K562 (cell line): ENCODE measurements at regions of chr19 and their contacts with region 1.

Region 1: DNA sequence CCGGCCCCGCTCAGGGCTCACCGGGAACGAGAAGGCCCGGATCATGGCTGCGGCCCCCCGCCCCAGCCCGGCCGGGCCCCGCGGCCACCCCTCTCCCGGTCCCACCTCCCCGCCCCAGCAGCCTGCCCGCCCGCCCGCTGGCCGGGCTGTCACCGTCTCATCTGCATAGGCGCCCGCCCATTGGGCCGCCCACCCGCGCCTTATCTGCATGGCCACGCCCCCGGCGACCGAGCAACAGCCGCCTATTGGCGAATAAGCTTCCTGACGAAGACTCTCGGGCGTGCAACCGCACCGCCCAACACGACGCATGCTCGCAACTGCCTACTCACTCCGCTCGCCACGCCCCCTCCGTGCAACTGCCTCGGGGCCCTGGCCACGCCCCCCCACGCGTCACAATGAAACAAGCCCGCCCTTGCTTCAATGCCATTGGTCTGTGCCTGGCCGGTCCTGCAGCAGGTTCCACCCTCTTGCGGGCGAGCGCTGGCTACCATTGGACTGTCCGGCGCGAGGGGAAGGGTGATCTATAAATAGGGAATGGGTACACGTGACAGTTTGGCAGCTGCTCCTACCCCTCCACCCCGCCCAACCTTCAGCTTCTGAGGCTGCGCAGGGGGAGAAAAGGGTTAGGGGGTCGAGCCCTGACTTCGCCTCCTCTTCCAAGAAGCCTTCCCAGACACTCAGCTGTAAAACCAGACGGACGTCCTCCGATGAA is at the start of gene DACT3:
- DNase-seq: peak; percentile 99 to 100 (median 99)
- ATAC-seq: peak; percentile 94
- H3K4me3 ChIP-seq: peak within 1 kb of the TSS; percentile 54
- H3K27ac ChIP-seq: peak within 1 kb of the TSS; percentile 54; the same call in 1 of the 3 replicates
- H3K4me1 ChIP-seq: peaks cover 25 to 30% of the 10 kb centered on the region in 2 experiments
- H3K27me3 ChIP-seq: no peaks in the 10 kb centered on the region
- CTCF ChIP-seq: no peak
- EP300 ChIP-seq: no peak
- POLR2A ChIP-seq: no peak
- RAD21 ChIP-seq: no peak
- polyA plus RNA-seq, gene DACT3: 0.67 to 0.83 TPM

Region 2: DNA sequence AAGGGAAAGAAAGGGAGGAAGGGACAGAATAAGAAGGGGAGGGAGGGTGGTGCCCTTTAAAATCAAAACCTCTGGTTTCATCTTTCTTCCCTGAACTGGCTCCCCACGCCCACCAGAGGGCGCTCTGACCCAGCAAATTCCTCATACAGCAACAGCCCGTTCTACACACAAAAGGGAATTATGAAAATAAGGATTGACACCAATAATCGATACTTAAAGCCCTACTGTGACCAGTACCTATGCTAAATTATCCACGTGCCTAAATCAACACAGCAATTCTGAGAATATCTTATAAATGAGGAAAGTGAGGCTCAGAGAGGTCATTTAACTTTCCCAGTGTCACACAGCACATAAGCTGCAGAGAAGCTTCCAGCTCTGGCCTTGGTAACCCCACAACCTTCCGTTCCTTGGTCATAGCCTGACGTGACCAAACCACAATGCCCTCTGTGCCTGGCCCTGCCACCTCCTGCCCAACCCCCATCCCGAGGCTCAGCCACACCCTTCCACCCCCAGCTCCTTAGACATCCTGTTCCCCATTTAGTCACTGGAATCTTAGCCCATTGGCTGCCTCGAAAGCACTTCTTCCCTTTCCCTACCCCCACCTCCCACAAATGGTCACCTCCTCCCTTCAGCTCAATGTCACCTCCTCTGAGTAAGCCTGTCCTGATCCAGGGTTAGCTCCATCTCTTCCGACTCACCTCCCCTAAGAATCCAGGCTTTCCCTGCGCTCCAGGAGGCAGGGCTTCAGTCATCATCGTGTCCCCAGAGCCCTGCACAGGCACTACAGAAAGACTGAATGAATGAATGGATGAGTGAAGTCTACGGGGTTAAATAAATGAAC is 131.3 kb before region 1 on chr19:
- CTCF ChIA-PET with region 1: interaction called, 22 read pairs
- POLR2A ChIA-PET with region 1: interaction called, 3 read pairs
- in situ Hi-C with region 1: loop called (anchors 5 kb)
- intact Hi-C with region 1: loop called (anchors 1 kb)
- DNase-seq: peak; percentile 73 to 82 (median 74)
- ATAC-seq: peak; percentile 79
- H3K4me3 ChIP-seq: no peak overlapping the region
- H3K27ac ChIP-seq: no peak overlapping the region
- H3K4me1 ChIP-seq: peaks cover 8 to 14% of the 10 kb centered on the region in 2 experiments; a peak in 2 of 5 replicates
- H3K27me3 ChIP-seq: peaks cover 6 to 28% of the 10 kb centered on the region in 2 experiments; a peak in 3 of 5 replicates
- CTCF ChIP-seq: peak; percentile 84 to 97 (median 95)
- EP300 ChIP-seq: no peak
- POLR2A ChIP-seq: no peak
- RAD21 ChIP-seq: peak; percentile 89 to 94

Region 3: DNA sequence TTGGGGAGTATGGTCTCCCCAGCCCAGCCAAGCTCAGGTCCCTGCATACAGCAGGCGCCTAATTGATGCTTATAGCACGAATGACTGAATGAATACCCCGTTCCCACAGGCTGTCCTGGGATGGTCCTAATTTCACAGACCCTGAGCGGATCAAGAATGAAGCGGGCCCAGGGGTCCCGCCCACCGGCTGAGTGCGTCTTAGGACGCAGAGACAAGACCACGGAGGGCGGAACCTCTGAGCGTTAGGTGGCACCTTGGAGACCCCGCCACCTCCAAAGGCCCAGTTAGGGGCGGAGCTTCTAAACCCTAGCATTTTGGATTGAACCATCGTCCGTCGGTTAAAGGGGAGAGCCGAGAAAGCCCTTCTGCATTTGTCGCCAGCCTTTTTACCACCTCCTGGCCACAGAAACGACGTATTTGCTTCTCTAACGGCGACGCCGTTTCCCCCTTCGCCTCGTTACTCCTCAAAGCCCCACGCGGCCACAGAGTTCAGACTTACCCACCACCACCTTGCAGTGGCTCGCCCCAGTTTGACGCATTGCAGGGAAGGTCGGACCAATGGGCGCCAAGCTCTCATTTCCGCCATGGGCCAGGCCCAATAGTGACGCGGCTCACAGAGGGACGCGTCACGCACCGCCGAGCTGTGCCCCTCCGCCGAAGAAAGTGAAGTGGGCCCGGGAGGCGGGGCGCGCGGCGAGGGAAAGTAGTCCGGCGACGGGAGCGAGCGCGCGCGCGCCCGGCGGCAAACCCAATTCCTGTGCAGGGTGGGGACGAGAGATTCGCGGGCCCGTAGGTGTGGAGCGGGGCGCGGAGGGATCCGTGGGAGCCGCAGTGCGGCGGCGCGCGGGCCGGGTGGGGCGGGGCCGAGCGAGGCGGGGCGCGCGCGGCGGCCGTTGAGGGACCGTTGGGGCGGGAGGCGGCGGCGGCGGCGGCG is 60.5 kb before region 1 on chr19:
- CTCF ChIA-PET with region 1: no interaction called
- POLR2A ChIA-PET with region 1: interaction called, 5 read pairs
- in situ Hi-C with region 1: no loop called
- intact Hi-C with region 1: loop called (anchors 1 kb)
- DNase-seq: peak; percentile 94 to 99 (median 97)
- ATAC-seq: peak; percentile 85
- H3K4me3 ChIP-seq: peak overlapping the region; percentile 79
- H3K27ac ChIP-seq: peak overlapping the region; percentile 100
- H3K4me1 ChIP-seq: peaks cover 15 to 50% of the 10 kb centered on the region in 2 experiments; a peak in 4 of 5 replicates
- H3K27me3 ChIP-seq: no peaks in the 10 kb centered on the region
- CTCF ChIP-seq: no peak
- EP300 ChIP-seq: peak; percentile 39
- POLR2A ChIP-seq: peak; percentile 77
- RAD21 ChIP-seq: no peak

Region 4: GRCh38 chr19:46614114-46614722 is 47.0 kb before region 1 on chr19:
- CTCF ChIA-PET with region 1: interaction called, 26 read pairs
- POLR2A ChIA-PET with region 1: interaction called, 10 read pairs
- in situ Hi-C with region 1: loop called (anchors 5 kb)
- intact Hi-C with region 1: loop called (anchors 1 kb)
- DNase-seq: peak; percentile 86 to 88 (median 86)
- ATAC-seq: peak; percentile 90
- H3K4me3 ChIP-seq: no peak overlapping the region
- H3K27ac ChIP-seq: no peak overlapping the region
- H3K4me1 ChIP-seq: peaks cover 17 to 18% of the 10 kb centered on the region in 2 experiments
- H3K27me3 ChIP-seq: no peaks in the 10 kb centered on the region
- CTCF ChIP-seq: peak; percentile 92 to 94 (median 94)
- EP300 ChIP-seq: no peak
- POLR2A ChIP-seq: no peak
- RAD21 ChIP-seq: peak; percentile 83 to 92

Region 5: DNA sequence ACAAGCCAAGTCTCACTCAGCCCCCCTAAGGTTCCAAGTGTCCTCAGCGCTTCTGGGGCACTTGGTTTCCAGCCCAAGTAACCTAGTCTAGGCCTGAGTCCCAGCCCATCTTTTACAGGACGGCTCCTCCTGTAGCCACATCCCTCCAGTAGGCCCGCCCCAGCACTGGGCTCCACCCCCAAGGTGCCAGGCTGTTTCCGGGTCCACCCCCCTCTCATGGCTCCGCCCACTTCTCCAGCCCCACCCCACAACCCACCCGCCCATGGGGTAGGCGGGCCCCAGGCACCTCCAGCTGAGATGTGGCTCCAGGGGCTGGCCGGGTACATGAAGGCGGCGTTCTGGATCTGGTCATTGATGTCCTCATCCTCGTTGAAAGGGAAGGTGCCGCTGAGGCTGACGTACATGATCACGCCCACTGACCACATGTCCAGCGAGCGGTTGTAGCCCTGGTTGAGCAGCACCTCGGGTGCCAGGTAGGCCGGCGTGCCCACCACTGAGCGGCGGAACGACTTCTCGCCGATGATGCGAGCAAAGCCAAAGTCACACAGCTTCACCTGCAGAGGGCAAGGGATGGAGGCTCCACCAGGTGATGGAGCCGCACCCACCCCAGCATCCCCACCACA is 17.0 kb after region 1 on chr19:
- CTCF ChIA-PET with region 1: no interaction called
- POLR2A ChIA-PET with region 1: interaction called, 10 read pairs
- in situ Hi-C with region 1: no loop called
- intact Hi-C with region 1: no loop called
- DNase-seq: peak; percentile 86 to 99 (median 98)
- ATAC-seq: peak; percentile 100
- H3K4me3 ChIP-seq: no peak overlapping the region
- H3K27ac ChIP-seq: no peak overlapping the region
- H3K4me1 ChIP-seq: peaks cover 0 to 15% of the 10 kb centered on the region in 2 experiments; a peak in 3 of 5 replicates
- H3K27me3 ChIP-seq: no peaks in the 10 kb centered on the region
- CTCF ChIP-seq: no peak
- EP300 ChIP-seq: no peak
- POLR2A ChIP-seq: no peak
- RAD21 ChIP-seq: no peak